ENCODE measurements at regions of chr15 and their contacts with region 1.

Region 1: DNA sequence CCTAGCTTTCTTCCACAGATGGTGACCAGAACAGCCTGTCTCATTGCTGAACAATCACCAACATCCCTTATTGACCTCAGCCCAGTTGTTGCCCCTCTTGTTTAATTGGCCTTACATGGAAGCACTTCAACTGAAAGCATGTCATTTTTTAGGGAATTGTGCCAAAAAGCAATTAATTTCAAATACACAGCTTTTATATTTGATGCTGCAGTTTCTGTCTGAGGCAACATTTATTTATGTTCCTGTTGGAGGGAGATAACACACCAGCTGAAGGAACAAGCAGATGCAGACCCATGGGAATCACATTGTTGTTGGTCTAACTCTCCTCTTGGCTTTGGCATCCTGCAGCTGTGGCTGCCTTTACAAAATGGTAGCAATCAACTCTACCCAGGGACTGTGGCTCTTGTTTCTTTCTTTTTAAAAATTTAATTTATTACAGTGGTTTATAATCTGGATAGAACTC is 498.1 kb upstream of the RGMA start:
- DNase-seq: no peak

Region 2: DNA sequence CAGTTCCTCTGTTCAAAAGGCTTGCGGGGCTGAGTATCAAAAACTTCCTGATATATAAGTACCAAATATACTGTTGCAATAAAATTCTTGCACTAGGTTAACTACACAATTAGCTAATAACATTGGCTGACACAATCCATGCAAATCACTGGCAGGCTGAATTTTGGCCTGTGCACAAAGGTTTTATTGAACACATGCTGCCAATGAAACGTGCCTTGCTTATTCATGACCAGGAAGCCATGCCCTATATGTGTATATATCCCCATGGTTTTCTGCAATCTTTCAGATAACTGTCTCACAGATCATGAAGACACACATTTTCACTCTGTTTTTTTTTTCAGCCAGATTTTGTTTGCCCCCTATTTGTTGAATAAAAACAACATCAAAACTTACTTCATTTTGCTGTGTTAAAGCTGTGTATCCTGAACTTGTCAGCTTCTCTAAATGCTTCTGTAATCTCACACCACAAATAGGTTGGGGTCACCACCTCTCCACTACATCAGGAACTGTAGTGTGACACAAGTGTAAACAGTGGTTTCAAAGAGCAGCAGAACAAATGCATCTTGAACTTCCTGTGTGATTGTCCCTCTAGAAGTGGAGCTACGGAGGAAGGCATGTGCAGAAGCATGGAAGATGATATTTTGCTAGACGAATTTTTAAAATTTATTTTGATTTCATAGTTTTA is 1822.7 kb after region 1 on chr15:
- intact Hi-C with region 1: loop called in 1 of 2 experiments (anchors 10 kb)
- DNase-seq: no peak